ENCODE measurements at regions of chr11 and their contacts with region 1.

Region 1: DNA sequence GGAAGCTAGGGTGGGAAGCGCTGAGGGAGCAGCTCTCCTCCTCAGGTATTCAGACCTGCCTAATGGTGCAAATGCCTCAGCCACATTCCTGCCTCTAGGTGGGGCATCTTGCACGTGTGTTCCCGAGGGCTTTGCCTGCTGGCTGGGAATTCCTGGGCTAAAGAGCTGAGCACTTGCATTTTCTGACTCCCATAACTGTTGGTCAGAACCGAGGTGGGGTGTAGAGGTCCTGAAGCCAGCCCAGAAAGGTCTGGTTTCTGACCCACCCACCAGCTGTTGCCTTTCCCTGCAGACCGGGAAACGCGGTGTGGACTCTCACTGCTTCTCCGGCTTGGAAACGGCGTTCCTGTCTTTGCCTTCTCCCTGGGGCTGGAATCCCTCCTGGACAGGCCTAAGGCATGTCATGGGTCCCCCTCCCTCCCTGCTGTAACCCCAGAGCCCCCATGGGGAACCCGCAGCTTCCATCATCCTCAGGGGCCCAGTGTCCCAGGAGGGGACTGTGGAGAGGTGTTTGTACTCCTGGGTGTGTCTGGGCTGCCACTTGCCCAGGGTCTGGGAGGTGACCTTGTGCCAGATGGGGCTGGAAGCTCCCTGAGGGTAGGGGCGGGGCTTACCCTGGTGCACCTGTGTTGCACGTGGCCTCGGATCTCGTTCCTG is 24.0 kb upstream of the SMIM38 start:
- DNase-seq: peak; percentile 92
- ATAC-seq: peak; percentile 94
- H3K4me3 Mint-ChIP-seq: no peak overlapping the region
- H3K27ac Mint-ChIP-seq: no peak overlapping the region
- H3K4me1 Mint-ChIP-seq: peaks cover 10% of the 10 kb centered on the region
- H3K27me3 Mint-ChIP-seq: peaks cover 8% of the 10 kb centered on the region; the same call in 1 of the 2 replicates
- CTCF ChIP-seq: peak; percentile 92

Region 2: GRCh38 chr11:68912254-68912653 is 219.5 kb before region 1 on chr11:
- CTCF ChIA-PET with region 1: no interaction called
- POLR2A ChIA-PET with region 1: no interaction called
- DNase-seq: no peak
- ATAC-seq: no peak
- H3K4me3 Mint-ChIP-seq: no peak overlapping the region
- H3K27ac Mint-ChIP-seq: no peak overlapping the region
- H3K4me1 Mint-ChIP-seq: no peaks in the 10 kb centered on the region
- H3K27me3 Mint-ChIP-seq: no peaks in the 10 kb centered on the region
- CTCF ChIP-seq: no peak

Region 3: GRCh38 chr11:69101115-69101791 is 30.5 kb before region 1 on chr11:
- CTCF ChIA-PET with region 1: interaction called, 46 read pairs
- POLR2A ChIA-PET with region 1: no interaction called
- DNase-seq: peak; percentile 83
- ATAC-seq: peak; percentile 91
- H3K4me3 Mint-ChIP-seq: no peak overlapping the region
- H3K27ac Mint-ChIP-seq: no peak overlapping the region
- H3K4me1 Mint-ChIP-seq: peaks cover 3% of the 10 kb centered on the region; the same call in 1 of the 2 replicates
- H3K27me3 Mint-ChIP-seq: no peaks in the 10 kb centered on the region
- CTCF ChIP-seq: peak; percentile 96

Region 4: GRCh38 chr11:69157156-69157821 is 25.5 kb after region 1 on chr11:
- CTCF ChIA-PET with region 1: interaction called, 27 read pairs
- POLR2A ChIA-PET with region 1: interaction called, 5 read pairs
- DNase-seq: no peak
- ATAC-seq: no peak
- H3K4me3 Mint-ChIP-seq: no peak overlapping the region
- H3K27ac Mint-ChIP-seq: no peak overlapping the region
- H3K4me1 Mint-ChIP-seq: peaks cover 13% of the 10 kb centered on the region
- H3K27me3 Mint-ChIP-seq: no peaks in the 10 kb centered on the region
- CTCF ChIP-seq: no peak

Region 5: GRCh38 chr11:69192301-69192721 is 60.5 kb after region 1 on chr11:
- CTCF ChIA-PET with region 1: interaction called, 10 read pairs
- POLR2A ChIA-PET with region 1: no interaction called
- DNase-seq: no peak
- ATAC-seq: no peak
- H3K4me3 Mint-ChIP-seq: no peak overlapping the region
- H3K27ac Mint-ChIP-seq: no peak overlapping the region
- H3K4me1 Mint-ChIP-seq: peaks cover 5% of the 10 kb centered on the region
- H3K27me3 Mint-ChIP-seq: no peaks in the 10 kb centered on the region
- CTCF ChIP-seq: no peak

Region 6: GRCh38 chr11:69220561-69221051 is 88.8 kb after region 1 on chr11:
- CTCF ChIA-PET with region 1: interaction called, 10 read pairs
- POLR2A ChIA-PET with region 1: no interaction called
- DNase-seq: peak; percentile 2
- ATAC-seq: no peak
- H3K4me3 Mint-ChIP-seq: no peak overlapping the region
- H3K27ac Mint-ChIP-seq: no peak overlapping the region
- H3K4me1 Mint-ChIP-seq: no peaks in the 10 kb centered on the region
- H3K27me3 Mint-ChIP-seq: no peaks in the 10 kb centered on the region
- CTCF ChIP-seq: no peak

Region 7: GRCh38 chr11:69257838-69258658 is 126.3 kb after region 1 on chr11:
- CTCF ChIA-PET with region 1: interaction called, 14 read pairs
- POLR2A ChIA-PET with region 1: no interaction called
- DNase-seq: no peak
- ATAC-seq: peak; percentile 88
- H3K4me3 Mint-ChIP-seq: no peak overlapping the region
- H3K27ac Mint-ChIP-seq: no peak overlapping the region
- H3K4me1 Mint-ChIP-seq: peaks cover 26% of the 10 kb centered on the region
- H3K27me3 Mint-ChIP-seq: peaks cover 30% of the 10 kb centered on the region
- CTCF ChIP-seq: no peak

Region 8: GRCh38 chr11:69642913-69643632 is 511.3 kb after region 1 on chr11:
- CTCF ChIA-PET with region 1: interaction called, 19 read pairs
- POLR2A ChIA-PET with region 1: interaction called, 3 read pairs
- DNase-seq: peak; percentile 77
- ATAC-seq: peak; percentile 2
- H3K4me3 Mint-ChIP-seq: peak overlapping the region; percentile 67
- H3K27ac Mint-ChIP-seq: no peak overlapping the region
- H3K4me1 Mint-ChIP-seq: peaks cover 8% of the 10 kb centered on the region; the same call in 1 of the 2 replicates
- H3K27me3 Mint-ChIP-seq: no peaks in the 10 kb centered on the region
- CTCF ChIP-seq: peak; percentile 92

Measured in WTC11 (cell line).